ENCODE measurements at regions of chr2 and their contacts with region 1.

Region 1: DNA sequence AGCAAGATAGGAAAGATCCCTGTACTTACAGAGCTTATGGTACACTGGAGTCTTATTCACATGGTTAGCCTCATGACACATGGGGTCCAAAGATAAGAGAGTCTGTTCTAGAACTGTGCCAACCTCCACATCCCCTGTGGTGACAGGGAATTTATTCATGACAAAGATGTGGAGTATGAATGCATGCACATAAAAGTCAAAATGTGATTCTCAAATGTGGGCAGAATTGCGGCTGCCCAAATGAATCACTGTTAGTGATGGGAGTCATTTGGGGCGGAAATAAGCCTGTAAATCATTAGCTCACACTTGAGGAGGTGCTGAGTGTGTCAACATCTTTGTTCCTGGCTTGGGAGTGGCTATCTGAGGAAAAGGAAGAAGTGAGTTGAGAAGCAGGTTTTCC is 560.6 kb downstream of the SLC4A3 start:
- DNase-seq: peak; percentile 73
- H3K4me3 Mint-ChIP-seq: no peak overlapping the region
- H3K27ac Mint-ChIP-seq: no peak overlapping the region
- H3K4me1 Mint-ChIP-seq: peaks cover 7% of the 10 kb centered on the region
- H3K27me3 Mint-ChIP-seq: no peaks in the 10 kb centered on the region
- CTCF ChIP-seq: no peak

Region 2: GRCh38 chr2:220277445-220278007 is 89.5 kb after region 1 on chr2:
- CTCF ChIA-PET with region 1: no interaction called
- POLR2A ChIA-PET with region 1: no interaction called
- intact Hi-C with region 1: loop called (anchors 2 kb)
- DNase-seq: peak; percentile 85
- H3K4me3 Mint-ChIP-seq: peak overlapping the region; percentile 35
- H3K27ac Mint-ChIP-seq: peak overlapping the region; percentile 89
- H3K4me1 Mint-ChIP-seq: peaks cover 56% of the 10 kb centered on the region
- H3K27me3 Mint-ChIP-seq: no peaks in the 10 kb centered on the region
- CTCF ChIP-seq: no peak

Measured in MCF 10A (cell line).